SK-N-SH (cell line): ENCODE measurements at regions of chr16 and their contacts with region 1.

Region 1: DNA sequence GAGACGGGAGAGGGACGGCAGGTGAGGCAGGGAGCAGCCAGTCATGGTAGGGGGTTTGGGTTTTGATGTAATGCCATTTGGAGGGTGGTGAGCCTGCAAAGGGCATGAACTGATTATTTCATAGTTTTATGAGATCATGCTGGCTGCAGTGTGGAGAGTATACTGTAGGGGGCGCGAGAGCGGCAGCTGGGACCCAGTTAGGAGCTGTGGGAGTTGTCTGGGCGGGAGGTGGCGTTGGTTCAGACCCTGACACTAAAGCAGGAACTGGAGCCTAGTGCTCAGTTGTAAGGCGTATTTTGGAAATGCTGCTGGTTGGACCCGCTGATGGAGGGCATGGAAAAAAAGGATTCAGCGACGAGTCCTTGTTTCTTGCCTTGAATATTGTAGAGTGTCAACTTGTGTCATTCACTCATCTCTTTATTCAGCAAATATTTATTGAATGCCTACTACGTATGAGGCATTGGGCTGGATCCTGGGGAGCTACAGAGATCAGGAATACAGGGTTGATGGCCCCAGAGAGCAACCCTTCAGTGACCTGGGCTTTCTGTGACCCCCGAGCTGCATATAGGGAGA is 23.7 kb upstream of the KDM8 start:
- DNase-seq: peak; percentile 77
- H3K4me3 ChIP-seq: no peak overlapping the region; a peak in 1 of 4 replicates
- H3K27ac ChIP-seq: no peak overlapping the region
- H3K4me1 ChIP-seq: peaks cover 0 to 5% of the 10 kb centered on the region in 2 experiments; a peak in 2 of 4 replicates
- H3K27me3 ChIP-seq: no peaks in the 10 kb centered on the region
- CTCF ChIP-seq: peak; percentile 75
- EP300 ChIP-seq: no peak
- RAD21 ChIP-seq: peak; percentile 78

Region 2: DNA sequence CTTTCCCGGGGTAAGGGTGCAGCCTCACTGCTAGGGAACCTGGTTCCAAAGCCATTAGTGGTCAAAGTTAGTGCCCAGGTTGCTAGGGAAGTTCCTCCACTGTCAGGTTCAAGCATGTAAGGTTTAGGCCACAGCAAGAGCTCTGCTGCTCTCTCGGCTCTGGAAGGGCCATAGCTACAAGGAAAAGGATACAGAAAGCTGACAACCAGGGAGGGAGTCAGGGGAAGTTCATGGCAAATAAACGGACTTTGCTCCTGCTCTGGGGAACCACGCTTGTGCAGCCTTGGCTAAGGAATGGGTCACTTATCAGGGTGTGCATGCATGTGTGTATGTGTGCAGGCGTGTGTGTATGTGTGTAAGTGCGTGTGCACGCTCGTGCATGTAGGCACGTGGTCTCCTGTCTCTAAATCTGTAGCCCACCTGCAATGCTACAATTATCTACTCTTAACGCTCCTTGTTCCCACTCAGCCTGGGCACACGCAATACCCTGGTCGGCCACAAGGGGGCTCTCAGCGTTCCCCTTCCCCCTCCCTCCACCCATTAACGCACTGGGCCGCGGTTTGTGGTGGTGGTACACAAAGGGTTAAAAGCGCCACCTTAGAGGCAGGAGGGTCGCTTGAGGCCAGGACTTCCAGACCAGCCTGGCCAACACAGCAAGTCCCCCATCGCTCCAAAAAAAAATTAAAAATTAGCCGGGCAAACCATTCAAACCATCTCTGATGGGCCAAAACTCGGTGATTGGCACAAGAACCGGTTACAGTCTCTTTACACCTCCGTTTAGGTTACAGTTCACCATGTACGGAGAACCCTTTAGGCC is 24.7 kb before region 1 on chr16:
- CTCF ChIA-PET with region 1: interaction called, 68 read pairs
- POLR2A ChIA-PET with region 1: no interaction called
- DNase-seq: peak; percentile 77
- H3K4me3 ChIP-seq: peak overlapping the region in 1 of 2 experiments; percentile 34; a peak in 1 of 4 replicates
- H3K27ac ChIP-seq: no peak overlapping the region
- H3K4me1 ChIP-seq: peaks cover 0 to 32% of the 10 kb centered on the region in 2 experiments; a peak in 1 of 4 replicates
- H3K27me3 ChIP-seq: no peaks in the 10 kb centered on the region
- CTCF ChIP-seq: peak; percentile 97
- EP300 ChIP-seq: no peak
- RAD21 ChIP-seq: peak; percentile 65

Region 3: DNA sequence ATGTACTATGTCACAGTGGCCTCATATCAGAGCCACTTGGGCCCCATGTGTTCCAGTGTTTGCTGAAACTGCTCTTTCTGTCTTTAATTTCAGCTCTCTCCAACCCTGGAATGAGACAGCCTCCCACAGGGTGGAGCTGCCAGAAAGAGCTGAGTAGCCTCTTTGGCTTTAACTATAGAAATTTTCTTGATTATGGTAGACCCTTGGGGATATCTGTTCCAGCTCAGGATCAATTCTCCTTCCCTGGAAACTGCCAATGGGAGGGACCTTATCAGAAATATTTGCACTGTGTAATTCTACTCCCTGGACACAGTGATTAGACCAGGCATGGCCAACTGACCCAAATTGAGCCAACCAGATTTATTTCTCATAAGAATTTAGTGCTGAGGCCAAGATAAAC is 15.2 kb before region 1 on chr16:
- CTCF ChIA-PET with region 1: interaction called, 35 read pairs
- POLR2A ChIA-PET with region 1: no interaction called
- DNase-seq: no peak
- H3K4me3 ChIP-seq: no peak overlapping the region
- H3K27ac ChIP-seq: no peak overlapping the region
- H3K4me1 ChIP-seq: peaks cover 0 to 11% of the 10 kb centered on the region in 2 experiments; a peak in 1 of 4 replicates
- H3K27me3 ChIP-seq: no peaks in the 10 kb centered on the region
- CTCF ChIP-seq: no peak
- EP300 ChIP-seq: no peak
- RAD21 ChIP-seq: no peak

Region 4: GRCh38 chr16:27254262-27254811 is 74.8 kb after region 1 on chr16:
- CTCF ChIA-PET with region 1: no interaction called
- POLR2A ChIA-PET with region 1: no interaction called
- DNase-seq: no peak
- H3K4me3 ChIP-seq: no peak overlapping the region
- H3K27ac ChIP-seq: peak overlapping the region; percentile 14 to 82; a peak in 3 of 4 replicates
- H3K4me1 ChIP-seq: peaks cover 0 to 18% of the 10 kb centered on the region in 2 experiments; a peak in 2 of 4 replicates
- H3K27me3 ChIP-seq: no peaks in the 10 kb centered on the region
- CTCF ChIP-seq: no peak
- EP300 ChIP-seq: no peak
- RAD21 ChIP-seq: no peak